Calu3 (cell line): ENCODE measurements at regions of chr1 and their contacts with region 1.

Region 1: DNA sequence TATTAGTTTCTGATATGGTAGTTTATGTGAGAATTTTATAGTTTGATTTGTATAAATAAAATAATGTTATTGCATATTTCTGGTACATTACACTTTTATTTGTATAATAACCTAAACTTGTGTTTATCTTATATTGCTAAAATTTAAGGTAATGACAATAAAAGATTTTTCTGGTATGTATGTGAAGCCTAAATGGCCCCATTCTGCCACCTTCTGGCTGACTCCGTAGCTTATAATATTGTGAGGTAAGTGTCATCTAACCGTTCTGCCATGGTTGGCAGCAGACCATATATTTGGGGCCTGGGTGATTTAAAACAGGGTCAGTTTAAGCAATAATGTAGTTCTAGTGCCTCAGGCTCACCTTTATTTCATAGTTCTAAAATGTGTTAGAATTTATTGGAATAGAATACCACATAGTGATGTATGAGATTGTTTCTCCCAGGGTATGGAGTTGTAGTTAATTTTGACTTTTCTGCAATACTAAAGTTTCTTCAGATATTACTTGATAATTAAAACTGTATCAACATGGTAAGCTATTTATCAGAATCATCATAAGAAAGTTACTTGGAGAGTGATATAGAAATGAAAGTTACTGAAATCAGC is 21.2 kb upstream of the PRKACB start:
- DNase-seq: peak; percentile 51
- H3K4me3 Mint-ChIP-seq: no peak overlapping the region
- H3K27ac Mint-ChIP-seq: no peak overlapping the region
- H3K4me1 Mint-ChIP-seq: no peaks in the 10 kb centered on the region
- H3K27me3 Mint-ChIP-seq: no peaks in the 10 kb centered on the region
- CTCF ChIP-seq: peak; percentile 55

Region 2: GRCh38 chr1:83905315-83905907 is 217.5 kb before region 1 on chr1:
- CTCF ChIA-PET with region 1: no interaction called
- intact Hi-C with region 1: loop called (anchors 2 kb)
- DNase-seq: peak; percentile 18
- H3K4me3 Mint-ChIP-seq: no peak overlapping the region
- H3K27ac Mint-ChIP-seq: no peak overlapping the region
- H3K4me1 Mint-ChIP-seq: peaks cover 29% of the 10 kb centered on the region
- H3K27me3 Mint-ChIP-seq: no peaks in the 10 kb centered on the region
- CTCF ChIP-seq: no peak

Region 3: GRCh38 chr1:83931658-83932253 is 191.1 kb before region 1 on chr1:
- CTCF ChIA-PET with region 1: interaction called, 6 read pairs
- intact Hi-C with region 1: loop called (anchors 1 kb)
- DNase-seq: peak; percentile 25
- H3K4me3 Mint-ChIP-seq: no peak overlapping the region
- H3K27ac Mint-ChIP-seq: no peak overlapping the region
- H3K4me1 Mint-ChIP-seq: no peaks in the 10 kb centered on the region
- H3K27me3 Mint-ChIP-seq: no peaks in the 10 kb centered on the region
- CTCF ChIP-seq: peak; percentile 24

Region 4: GRCh38 chr1:84260864-84261518 is 138.1 kb after region 1 on chr1:
- CTCF ChIA-PET with region 1: no interaction called
- intact Hi-C with region 1: no loop called
- DNase-seq: peak; percentile 21
- H3K4me3 Mint-ChIP-seq: no peak overlapping the region
- H3K27ac Mint-ChIP-seq: no peak overlapping the region
- H3K4me1 Mint-ChIP-seq: peaks cover 38% of the 10 kb centered on the region
- H3K27me3 Mint-ChIP-seq: no peaks in the 10 kb centered on the region
- CTCF ChIP-seq: no peak

Region 5: GRCh38 chr1:84427520-84428188 is 304.8 kb after region 1 on chr1:
- CTCF ChIA-PET with region 1: no interaction called
- intact Hi-C with region 1: no loop called
- DNase-seq: peak; percentile 36
- H3K4me3 Mint-ChIP-seq: no peak overlapping the region
- H3K27ac Mint-ChIP-seq: no peak overlapping the region
- H3K4me1 Mint-ChIP-seq: peaks cover 33% of the 10 kb centered on the region
- H3K27me3 Mint-ChIP-seq: no peaks in the 10 kb centered on the region
- CTCF ChIP-seq: no peak